HepG2 (cell line): ENCODE measurements at regions of chr3 and their contacts with region 1.

Region 1: DNA sequence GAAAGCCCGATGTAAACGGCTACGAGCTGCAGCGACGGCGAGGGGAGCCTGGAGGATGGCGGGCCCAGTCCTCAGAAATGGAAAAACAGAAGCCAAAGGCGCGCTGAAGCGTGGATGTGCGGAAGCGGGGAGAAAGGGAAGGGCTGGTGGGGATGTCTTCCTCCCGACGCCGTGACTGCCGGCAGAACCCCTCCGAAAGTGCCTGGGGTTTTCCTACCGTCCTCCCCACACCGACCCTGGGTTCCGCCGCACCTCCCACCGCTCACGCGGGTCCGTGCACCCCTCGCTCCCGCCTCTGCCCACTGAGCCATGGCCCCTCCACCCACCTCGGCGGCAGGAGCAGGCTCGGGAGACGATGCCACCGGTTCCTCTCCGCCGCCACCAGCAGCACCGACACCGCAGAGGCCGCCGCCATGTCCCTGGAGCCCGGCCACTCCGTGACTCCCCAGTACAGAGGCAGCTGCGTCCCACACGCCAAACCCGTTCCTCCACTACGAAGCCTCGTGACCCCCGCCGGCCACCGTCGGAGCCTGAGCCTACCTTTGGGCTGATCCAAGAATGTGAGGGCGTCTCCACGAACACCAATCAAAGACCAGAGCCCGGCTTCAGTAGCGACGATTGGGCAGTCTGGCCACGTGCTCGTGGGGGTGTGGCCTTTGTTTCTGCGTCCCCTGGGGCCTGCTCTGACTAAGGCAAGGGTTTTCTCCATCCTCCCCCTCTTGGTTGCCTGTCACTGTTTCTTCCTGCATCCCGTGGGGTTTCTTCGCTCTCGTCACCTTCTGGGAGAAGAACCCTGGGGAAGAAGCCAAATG is at the start of gene MCCC1:
- DNase-seq: peak; percentile 96
- ATAC-seq: peak; percentile 99
- H3K4me3 ChIP-seq: peak within 1 kb of the TSS; percentile 75 to 92 (median 89)
- H3K27ac ChIP-seq: peak within 1 kb of the TSS; percentile 68
- H3K4me1 ChIP-seq: peaks cover 22% of the 10 kb centered on the region
- H3K27me3 ChIP-seq: no peaks in the 10 kb centered on the region
- CTCF ChIP-seq: 0 out of 2 replicates have a peak, but pooled peaks have one; percentile 16
- EP300 ChIP-seq: 0 out of 4 replicates have a peak, but pooled peaks of 1 of the 2 experiments have one; percentile 42
- POLR2A ChIP-seq: peak; percentile 73 to 86
- RAD21 ChIP-seq: 0 out of 2 replicates have a peak, but pooled peaks have one; percentile 13
- total RNA-seq, gene MCCC1: 30.1 and 34.7 TPM in 2 replicates

Region 2: GRCh38 chr3:183073839-183074238 is 25.4 kb before region 1 on chr3:
- CTCF ChIA-PET with region 1: no interaction called
- POLR2A ChIA-PET with region 1: no interaction called
- in situ Hi-C with region 1: no loop called
- intact Hi-C with region 1: no loop called
- DNase-seq: no peak
- ATAC-seq: no peak
- H3K4me3 ChIP-seq: no peak overlapping the region
- H3K27ac ChIP-seq: no peak overlapping the region
- H3K4me1 ChIP-seq: no peaks in the 10 kb centered on the region
- H3K27me3 ChIP-seq: no peaks in the 10 kb centered on the region
- CTCF ChIP-seq: no peak
- EP300 ChIP-seq: no peak
- POLR2A ChIP-seq: no peak
- RAD21 ChIP-seq: no peak

Region 3: GRCh38 chr3:183116025-183116614 is 16.9 kb after region 1 on chr3:
- CTCF ChIA-PET with region 1: no interaction called
- POLR2A ChIA-PET with region 1: no interaction called
- in situ Hi-C with region 1: no loop called
- intact Hi-C with region 1: loop called (anchors 1 kb)
- DNase-seq: peak; percentile 39
- ATAC-seq: peak; percentile 87
- H3K4me3 ChIP-seq: peak overlapping the region; percentile 10 to 69 (median 57); a peak in 4 of 6 replicates
- H3K27ac ChIP-seq: no peak overlapping the region
- H3K4me1 ChIP-seq: no peaks in the 10 kb centered on the region; the same call in 1 of the 2 replicates
- H3K27me3 ChIP-seq: peaks cover 0 to 27% of the 10 kb centered on the region in 2 experiments; a peak in 3 of 5 replicates
- CTCF ChIP-seq: no peak
- EP300 ChIP-seq: no peak
- POLR2A ChIP-seq: no peak
- RAD21 ChIP-seq: no peak

Region 4: DNA sequence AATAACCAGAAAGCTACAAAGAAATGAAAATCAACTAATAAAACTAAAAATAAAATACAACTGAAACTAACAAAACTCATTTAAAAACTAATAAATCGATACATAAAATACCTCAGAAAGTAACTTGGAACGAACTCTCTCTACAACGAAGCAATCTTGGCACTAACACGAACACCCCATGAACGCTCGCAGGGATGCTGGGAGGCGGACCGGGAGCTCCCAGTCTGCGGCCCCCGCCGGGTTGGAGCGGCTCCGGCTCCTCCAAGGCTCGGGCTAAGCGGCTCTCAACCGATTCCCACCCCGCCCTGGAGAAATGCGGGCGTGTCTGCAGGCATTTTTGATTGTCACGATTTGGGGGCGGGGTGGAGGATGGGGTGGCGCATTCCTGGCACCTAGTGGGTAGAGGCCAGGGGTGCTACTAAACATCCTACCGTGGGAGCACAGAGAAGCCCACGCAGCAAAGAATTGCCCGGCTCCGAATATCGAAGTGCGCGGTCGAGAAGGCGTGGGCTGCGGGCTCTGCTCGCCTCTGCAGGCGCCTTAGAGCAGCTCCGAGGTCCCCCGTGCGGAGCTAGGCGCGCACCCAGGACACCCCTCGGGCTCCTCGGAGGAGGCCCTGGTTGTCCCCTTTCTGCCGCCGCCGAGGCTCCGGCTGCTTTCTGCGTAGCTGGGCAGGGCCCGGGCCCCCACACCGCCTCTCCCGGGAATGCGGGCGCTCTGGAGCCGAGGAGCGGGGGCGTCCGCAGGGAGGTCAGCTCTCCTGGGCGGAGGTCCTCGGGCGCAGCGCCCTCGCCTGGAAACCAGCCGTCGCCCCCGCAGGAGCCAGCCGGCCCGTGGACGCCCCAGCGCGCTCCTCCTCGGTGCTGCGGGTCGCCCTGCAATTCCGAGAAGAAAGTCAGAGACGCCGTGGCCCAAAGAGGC is 79.7 kb after region 1 on chr3:
- CTCF ChIA-PET with region 1: no interaction called
- POLR2A ChIA-PET with region 1: no interaction called
- in situ Hi-C with region 1: no loop called
- intact Hi-C with region 1: no loop called
- DNase-seq: no peak
- ATAC-seq: peak; percentile 86
- H3K4me3 ChIP-seq: peak overlapping the region in 2 of 3 experiments; percentile 21 to 57; a peak in 3 of 6 replicates
- H3K27ac ChIP-seq: no peak overlapping the region
- H3K4me1 ChIP-seq: no peaks in the 10 kb centered on the region; the same call in 1 of the 2 replicates
- H3K27me3 ChIP-seq: peaks cover 8 to 34% of the 10 kb centered on the region in 2 experiments
- CTCF ChIP-seq: peak; percentile 58
- EP300 ChIP-seq: no peak
- POLR2A ChIP-seq: no peak
- RAD21 ChIP-seq: 0 out of 2 replicates have a peak, but pooled peaks have one; percentile 30